Dendritic cell treated with granulocyte-macrophage colony-stimulating factor and Interleukin-4, amounts not matched to agents 40 ng/mL and 50 ng/mL, for 4 days (primary cell): ENCODE measurements at regions of chr5 and their contacts with region 1.

Region 1: GRCh38 chr5:143279698-143280097 is 123.8 kb downstream of the NR3C1 start:
- H3K4me3 Mint-ChIP-seq: no peak overlapping the region
- H3K27ac Mint-ChIP-seq: no peak overlapping the region
- H3K4me1 Mint-ChIP-seq: peaks cover 9% of the 10 kb centered on the region
- H3K27me3 Mint-ChIP-seq: no peaks in the 10 kb centered on the region

Region 2: GRCh38 chr5:142699184-142699720 is 580.4 kb before region 1 on chr5:
- intact Hi-C with region 1: no loop called
- H3K4me3 Mint-ChIP-seq: no peak overlapping the region
- H3K27ac Mint-ChIP-seq: no peak overlapping the region
- H3K4me1 Mint-ChIP-seq: peaks cover 5% of the 10 kb centered on the region
- H3K27me3 Mint-ChIP-seq: peaks cover 12% of the 10 kb centered on the region

Region 3: DNA sequence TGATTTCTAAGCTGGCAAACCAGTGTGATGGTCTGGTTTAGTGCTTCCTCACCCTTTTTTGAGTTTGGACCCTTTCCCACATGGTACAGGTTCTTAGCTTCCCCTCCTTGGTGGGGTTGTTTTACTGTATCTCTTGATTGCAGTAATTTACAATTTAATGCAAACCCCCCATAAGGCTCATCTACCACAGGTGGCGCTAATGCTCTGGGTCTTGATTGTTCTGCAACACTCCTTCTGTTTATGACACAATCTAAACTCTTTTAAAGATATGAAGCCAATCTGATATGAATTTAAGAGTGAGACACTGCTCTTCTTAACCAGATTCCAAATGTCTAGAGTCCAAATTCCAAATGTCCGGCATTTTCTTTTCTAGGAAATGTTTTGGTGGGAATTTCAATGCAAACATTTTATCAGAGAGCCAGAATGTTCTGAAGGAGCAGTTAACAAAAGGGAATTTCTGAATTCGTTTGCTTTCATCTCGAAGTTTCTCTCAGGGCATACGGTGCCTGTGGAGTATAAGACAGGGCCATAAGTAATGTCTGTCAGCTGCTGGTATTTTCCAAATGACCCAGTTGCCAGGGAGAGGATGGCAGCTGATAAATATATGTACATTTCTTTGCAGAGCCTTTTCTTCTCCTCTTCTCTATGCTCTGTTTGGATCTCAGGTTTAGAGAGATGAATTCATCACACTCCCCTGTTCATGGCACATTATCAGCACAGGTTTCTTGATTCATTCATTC is 262.8 kb before region 1 on chr5:
- intact Hi-C with region 1: loop called (anchors 10 kb)
- H3K4me3 Mint-ChIP-seq: no peak overlapping the region
- H3K27ac Mint-ChIP-seq: no peak overlapping the region
- H3K4me1 Mint-ChIP-seq: peaks cover 23% of the 10 kb centered on the region
- H3K27me3 Mint-ChIP-seq: no peaks in the 10 kb centered on the region

Region 4: GRCh38 chr5:143395638-143396352 is 116.1 kb after region 1 on chr5:
- intact Hi-C with region 1: loop called (anchors 10 kb)
- H3K4me3 Mint-ChIP-seq: peak overlapping the region; percentile 6
- H3K27ac Mint-ChIP-seq: no peak overlapping the region
- H3K4me1 Mint-ChIP-seq: peaks cover 26% of the 10 kb centered on the region
- H3K27me3 Mint-ChIP-seq: no peaks in the 10 kb centered on the region